CD8-positive, alpha-beta T cell (primary cell): ENCODE measurements at regions of chr1 and their contacts with region 1.

Region 1: GRCh38 chr1:179809506-179810366 is 66.6 kb downstream of the FAM163A start:
- DNase-seq: peak; percentile 37 to 87 (median 71)
- ATAC-seq: peak; percentile 84
- H3K4me3 ChIP-seq: no peak overlapping the region
- H3K4me3 Mint-ChIP-seq: peak overlapping the region; percentile 1
- H3K27ac ChIP-seq: no peak overlapping the region
- H3K27ac Mint-ChIP-seq: no peak overlapping the region
- H3K4me1 ChIP-seq: peaks cover 11% of the 10 kb centered on the region
- H3K4me1 Mint-ChIP-seq: peaks cover 12% of the 10 kb centered on the region
- H3K27me3 ChIP-seq: no peaks in the 10 kb centered on the region
- H3K27me3 Mint-ChIP-seq: peaks cover 5% of the 10 kb centered on the region
- CTCF ChIP-seq: peak; percentile 82

Region 2: GRCh38 chr1:178542560-178543356 is 1267.0 kb before region 1 on chr1:
- CTCF ChIA-PET with region 1: interaction called, 4 read pairs
- POLR2A ChIA-PET with region 1: no interaction called
- intact Hi-C with region 1: loop called (anchors 5 to 10 kb)
- DNase-seq: peak; percentile 68 to 96 (median 85)
- ATAC-seq: peak; percentile 92
- H3K4me3 ChIP-seq: peak overlapping the region; percentile 75 to 92
- H3K4me3 Mint-ChIP-seq: peak overlapping the region; percentile 90
- H3K27ac ChIP-seq: peak overlapping the region in 1 of 2 experiments; percentile 22
- H3K27ac Mint-ChIP-seq: peak overlapping the region; percentile 62
- H3K4me1 ChIP-seq: peaks cover 11% of the 10 kb centered on the region
- H3K4me1 Mint-ChIP-seq: peaks cover 9% of the 10 kb centered on the region
- H3K27me3 ChIP-seq: no peaks in the 10 kb centered on the region
- H3K27me3 Mint-ChIP-seq: no peaks in the 10 kb centered on the region
- CTCF ChIP-seq: peak; percentile 98

Region 3: DNA sequence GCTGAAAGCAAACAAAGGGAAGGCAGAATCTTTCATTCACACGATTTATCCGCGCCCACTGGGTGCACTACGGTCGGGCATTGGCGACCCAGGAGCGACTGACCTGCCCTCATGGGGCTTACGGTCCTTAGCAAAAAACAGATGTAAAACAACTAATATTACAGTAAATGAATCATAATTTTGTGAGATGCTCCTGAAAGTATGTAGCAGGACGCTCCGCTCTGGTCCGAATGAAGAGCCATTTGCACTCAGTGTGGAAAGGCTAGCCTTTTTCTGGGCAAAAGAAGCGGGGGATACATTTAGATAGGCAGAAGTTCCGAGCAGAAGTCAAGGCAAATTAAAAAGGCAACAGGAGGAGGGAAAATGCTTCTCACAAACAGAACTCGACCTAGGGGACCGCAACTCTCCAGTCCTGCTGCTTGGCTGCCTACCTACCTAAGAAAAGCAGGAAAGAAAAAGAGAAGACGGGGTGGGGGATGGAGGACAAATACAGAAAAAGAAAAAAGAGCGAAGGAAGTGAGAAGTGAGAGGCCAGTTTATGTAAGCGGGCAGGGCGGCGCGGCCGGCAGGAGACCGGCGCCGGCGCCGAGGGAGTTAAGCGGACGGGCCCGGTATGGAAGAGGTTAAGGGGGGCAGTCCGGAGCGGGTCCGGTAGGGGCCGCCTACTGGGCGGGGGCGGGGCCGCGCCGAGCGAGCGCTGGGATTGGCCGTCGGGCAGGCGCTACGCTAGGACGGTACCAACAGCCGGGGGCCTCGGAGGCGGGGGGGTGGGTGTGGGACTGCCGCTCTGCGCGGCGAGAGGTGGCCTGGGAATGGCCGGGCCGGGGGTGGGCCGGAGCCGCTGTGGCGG is 784.4 kb before region 1 on chr1 and contains the start of gene FAM20B:
- CTCF ChIA-PET with region 1: no interaction called
- POLR2A ChIA-PET with region 1: no interaction called
- intact Hi-C with region 1: loop called (anchors 2 to 5 kb)
- DNase-seq: peak; percentile 82 to 94 (median 90)
- ATAC-seq: peak; percentile 85
- H3K4me3 ChIP-seq: peak within 1 kb of the TSS; percentile 70 to 81
- H3K4me3 Mint-ChIP-seq: peak within 1 kb of the TSS; percentile 87
- H3K27ac ChIP-seq: peak within 1 kb of the TSS; percentile 77 to 83
- H3K27ac Mint-ChIP-seq: peak within 1 kb of the TSS; percentile 88
- H3K4me1 ChIP-seq: peaks cover 25% of the 10 kb centered on the region
- H3K4me1 Mint-ChIP-seq: peaks cover 40% of the 10 kb centered on the region
- H3K27me3 ChIP-seq: no peaks in the 10 kb centered on the region
- H3K27me3 Mint-ChIP-seq: no peaks in the 10 kb centered on the region
- CTCF ChIP-seq: no peak
- total RNA-seq, gene FAM20B: 11.1 to 11.2 TPM

Region 4: GRCh38 chr1:179081687-179082332 is 727.9 kb before region 1 on chr1 and contains the start of gene TOR3A:
- CTCF ChIA-PET with region 1: interaction called, 4 read pairs
- POLR2A ChIA-PET with region 1: no interaction called
- intact Hi-C with region 1: loop called in 1 of 2 experiments (anchors 2 kb)
- DNase-seq: peak; percentile 43 to 87 (median 75)
- ATAC-seq: peak; percentile 47
- H3K4me3 ChIP-seq: peak within 1 kb of the TSS; percentile 62 to 78
- H3K4me3 Mint-ChIP-seq: peak within 1 kb of the TSS; percentile 98
- H3K27ac ChIP-seq: peak within 1 kb of the TSS; percentile 58 to 74
- H3K27ac Mint-ChIP-seq: peak within 1 kb of the TSS; percentile 97
- H3K4me1 ChIP-seq: peaks cover 20% of the 10 kb centered on the region
- H3K4me1 Mint-ChIP-seq: peaks cover 31% of the 10 kb centered on the region
- H3K27me3 ChIP-seq: no peaks in the 10 kb centered on the region
- H3K27me3 Mint-ChIP-seq: no peaks in the 10 kb centered on the region
- CTCF ChIP-seq: no peak
- total RNA-seq, gene TOR3A: 15.6 to 16.0 TPM

Region 5: DNA sequence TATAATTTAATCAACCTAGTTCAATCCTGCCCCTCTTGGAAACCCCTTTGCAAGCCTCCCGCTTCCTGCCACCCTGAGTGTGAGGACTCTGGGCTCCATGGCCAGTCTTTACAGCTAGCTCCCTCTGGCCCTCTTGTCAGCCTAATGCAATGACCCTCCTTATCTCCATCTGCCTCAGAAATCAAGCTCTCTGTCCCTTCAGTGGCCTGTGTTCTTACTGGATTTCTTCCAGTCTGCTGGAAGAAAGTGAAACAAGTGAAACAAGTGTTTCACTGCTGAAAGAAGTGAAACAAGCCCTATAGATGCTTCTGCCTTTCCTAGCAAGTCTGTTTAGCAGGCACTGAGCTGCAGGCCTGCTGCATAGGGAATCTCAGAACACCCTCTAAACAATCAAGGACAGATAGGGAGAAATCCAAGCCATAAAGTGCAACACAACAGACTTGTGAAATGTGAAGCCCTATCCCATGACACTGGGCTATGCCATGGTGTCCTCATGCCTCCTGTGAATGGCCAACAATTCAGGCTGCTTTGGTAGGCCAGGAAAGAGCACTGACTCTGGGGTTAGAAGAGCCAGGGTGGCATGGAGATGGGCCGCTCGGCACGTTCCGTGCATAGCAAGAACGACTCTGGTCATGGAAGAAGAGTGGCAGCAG is 10.7 kb before region 1 on chr1:
- CTCF ChIA-PET with region 1: interaction called, 25 read pairs
- POLR2A ChIA-PET with region 1: no interaction called
- intact Hi-C with region 1: no loop called
- DNase-seq: no peak
- ATAC-seq: no peak
- H3K4me3 ChIP-seq: no peak overlapping the region
- H3K4me3 Mint-ChIP-seq: no peak overlapping the region
- H3K27ac ChIP-seq: no peak overlapping the region
- H3K27ac Mint-ChIP-seq: no peak overlapping the region
- H3K4me1 ChIP-seq: no peaks in the 10 kb centered on the region
- H3K4me1 Mint-ChIP-seq: no peaks in the 10 kb centered on the region
- H3K27me3 ChIP-seq: no peaks in the 10 kb centered on the region
- H3K27me3 Mint-ChIP-seq: no peaks in the 10 kb centered on the region
- CTCF ChIP-seq: no peak

Region 6: GRCh38 chr1:179831852-179832699 is 22.3 kb after region 1 on chr1:
- CTCF ChIA-PET with region 1: interaction called, 19 read pairs
- POLR2A ChIA-PET with region 1: interaction called, 11 read pairs
- intact Hi-C with region 1: no loop called
- DNase-seq: peak in 2 of 9 experiments; percentile 47 to 49
- ATAC-seq: peak; percentile 66
- H3K4me3 ChIP-seq: no peak overlapping the region
- H3K4me3 Mint-ChIP-seq: peak overlapping the region; percentile 66
- H3K27ac ChIP-seq: peak overlapping the region; percentile 1 to 8
- H3K27ac Mint-ChIP-seq: peak overlapping the region; percentile 75
- H3K4me1 ChIP-seq: peaks cover 23% of the 10 kb centered on the region
- H3K4me1 Mint-ChIP-seq: peaks cover 24% of the 10 kb centered on the region
- H3K27me3 ChIP-seq: no peaks in the 10 kb centered on the region
- H3K27me3 Mint-ChIP-seq: peaks cover 2% of the 10 kb centered on the region
- CTCF ChIP-seq: no peak

Region 7: GRCh38 chr1:179954493-179955297 is 145.0 kb after region 1 on chr1 and contains the start of gene CEP350:
- CTCF ChIA-PET with region 1: no interaction called
- POLR2A ChIA-PET with region 1: interaction called, 5 read pairs
- intact Hi-C with region 1: loop called in 1 of 2 experiments (anchors 2 kb)
- DNase-seq: peak; percentile 94 to 100 (median 97)
- ATAC-seq: peak; percentile 86
- H3K4me3 ChIP-seq: peak within 1 kb of the TSS; percentile 69 to 85
- H3K4me3 Mint-ChIP-seq: peak within 1 kb of the TSS; percentile 85
- H3K27ac ChIP-seq: peak within 1 kb of the TSS; percentile 77 to 88
- H3K27ac Mint-ChIP-seq: peak within 1 kb of the TSS; percentile 95
- H3K4me1 ChIP-seq: peaks cover 35% of the 10 kb centered on the region
- H3K4me1 Mint-ChIP-seq: peaks cover 59% of the 10 kb centered on the region
- H3K27me3 ChIP-seq: no peaks in the 10 kb centered on the region
- H3K27me3 Mint-ChIP-seq: no peaks in the 10 kb centered on the region
- CTCF ChIP-seq: no peak
- total RNA-seq, gene CEP350: 37.6 to 42.7 TPM

Region 8: DNA sequence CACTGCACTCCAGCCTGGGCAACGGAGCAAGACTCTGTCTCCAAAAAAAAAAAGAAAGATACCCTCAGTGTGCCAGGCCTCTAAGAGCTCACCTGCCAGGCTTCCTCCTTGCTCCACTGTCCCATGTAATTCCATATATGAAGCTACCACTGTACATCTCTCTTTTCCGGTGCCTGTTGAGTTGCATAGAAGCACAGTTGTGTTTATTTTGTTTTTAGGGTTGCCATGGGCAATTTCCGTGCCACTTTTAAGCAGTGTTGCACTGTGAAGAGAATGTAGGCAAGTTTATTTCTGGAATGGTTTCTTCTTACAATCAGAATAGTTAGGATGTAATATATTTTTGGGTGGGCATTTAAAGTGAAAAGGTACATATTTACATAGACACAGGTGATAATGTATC is 1247.3 kb after region 1 on chr1:
- CTCF ChIA-PET with region 1: no interaction called
- POLR2A ChIA-PET with region 1: no interaction called
- intact Hi-C with region 1: no loop called
- DNase-seq: no peak
- ATAC-seq: no peak
- H3K4me3 ChIP-seq: no peak overlapping the region
- H3K4me3 Mint-ChIP-seq: no peak overlapping the region
- H3K27ac ChIP-seq: no peak overlapping the region
- H3K27ac Mint-ChIP-seq: no peak overlapping the region
- H3K4me1 ChIP-seq: peaks cover 4% of the 10 kb centered on the region
- H3K4me1 Mint-ChIP-seq: peaks cover 9% of the 10 kb centered on the region
- H3K27me3 ChIP-seq: no peaks in the 10 kb centered on the region
- H3K27me3 Mint-ChIP-seq: no peaks in the 10 kb centered on the region
- CTCF ChIP-seq: no peak